ENCODE measurements at regions of chr3 and their contacts with region 1.

Region 1: GRCh38 chr3:20739814-20740213 is 553.8 kb upstream of the SGO1 start:
- DNase-seq: no peak
- ATAC-seq: peak; percentile 80

Region 2: GRCh38 chr3:20340324-20340928 is 399.4 kb before region 1 on chr3:
- intact Hi-C with region 1: loop called (anchors 10 kb)
- DNase-seq: peak; percentile 57
- ATAC-seq: peak; percentile 88

Region 3: DNA sequence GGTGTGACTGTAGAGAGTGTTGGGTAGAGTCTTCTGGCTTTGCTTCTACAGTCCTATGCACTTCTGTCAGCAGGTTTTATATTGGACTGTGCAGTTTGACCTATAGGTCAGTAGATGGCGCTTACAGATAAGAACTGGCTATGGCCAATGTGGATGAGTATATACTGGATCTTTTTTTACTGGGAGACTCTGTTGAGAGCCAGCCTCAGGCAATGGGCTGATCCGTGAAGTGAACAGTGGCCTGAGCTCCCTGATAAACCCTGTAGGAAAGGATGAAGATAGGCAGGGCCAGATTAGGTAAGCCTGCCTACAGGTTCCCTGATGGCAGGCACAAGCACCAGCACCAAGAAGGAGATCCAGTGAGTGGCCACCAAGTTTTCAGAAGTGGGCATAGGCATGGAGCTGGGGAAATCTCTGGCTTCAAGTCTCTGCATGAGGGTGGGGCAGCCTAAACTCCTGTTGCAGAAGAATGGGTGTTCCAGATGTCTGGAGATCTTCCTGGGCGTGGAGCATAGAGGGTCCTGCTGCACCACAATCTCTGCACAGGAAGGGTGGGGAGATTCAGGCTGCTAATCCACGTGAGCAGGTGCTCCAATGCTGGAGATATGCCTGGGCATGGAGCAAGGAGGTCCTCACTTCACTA is 227.8 kb before region 1 on chr3:
- intact Hi-C with region 1: loop called (anchors 2 kb)
- DNase-seq: no peak
- ATAC-seq: peak; percentile 90

Region 4: GRCh38 chr3:20776692-20777091 is 36.9 kb after region 1 on chr3:
- intact Hi-C with region 1: no loop called
- DNase-seq: no peak
- ATAC-seq: peak; percentile 46

Region 5: DNA sequence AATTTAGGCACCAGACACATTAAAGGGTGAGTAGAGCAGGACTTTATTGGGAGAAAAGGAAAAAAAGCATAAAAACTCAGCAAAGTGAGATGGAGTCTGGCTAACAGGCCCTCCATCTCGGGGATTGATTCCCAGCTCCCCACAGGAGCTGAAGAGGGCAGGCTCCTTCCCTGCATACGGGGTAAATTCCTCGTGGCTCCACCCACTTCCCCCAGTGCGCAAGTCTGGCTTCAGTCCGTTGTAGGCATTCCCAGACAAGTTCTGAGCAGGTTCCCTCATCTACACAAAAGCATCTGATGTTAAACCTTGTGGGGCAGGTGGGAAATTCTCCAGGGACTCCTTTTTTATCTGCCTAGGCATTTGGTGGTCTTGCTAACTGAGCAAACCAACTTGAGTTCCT is 288.6 kb after region 1 on chr3:
- intact Hi-C with region 1: no loop called
- DNase-seq: no peak
- ATAC-seq: no peak

Measured in Right ventricle myocardium superior (tissue), 1 donor.